Aorta (tissue), 5 donors: ENCODE measurements at regions of chr3 and their contacts with region 1.

Region 1: DNA sequence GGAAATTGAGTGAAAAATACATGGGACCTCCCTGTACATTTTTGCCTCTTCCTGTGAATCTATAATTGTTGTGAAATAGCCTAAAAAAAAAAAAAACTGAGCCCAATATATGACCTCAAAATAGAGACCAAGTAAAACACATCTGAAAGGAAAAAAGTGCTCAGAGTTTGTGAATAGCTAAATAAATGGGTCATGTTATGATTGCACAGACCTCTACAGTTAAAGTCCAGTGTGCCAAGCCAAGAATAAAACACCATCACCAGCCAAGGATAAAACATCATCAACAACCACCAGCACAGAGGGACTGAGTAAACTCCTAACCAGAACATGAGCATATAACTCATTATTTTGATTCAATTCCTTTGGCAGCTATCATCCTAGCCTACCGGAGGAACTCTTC is 115.6 kb upstream of the AGTR1 start:
- DNase-seq: no peak
- ATAC-seq: peak; percentile 86
- H3K4me3 ChIP-seq: no peak overlapping the region
- H3K27ac ChIP-seq: no peak overlapping the region
- H3K4me1 ChIP-seq: peaks cover 0 to 2% of the 10 kb centered on the region in 2 donors
- H3K27me3 ChIP-seq: no peaks in the 10 kb centered on the region

Region 2: GRCh38 chr3:148615385-148615784 is 33.3 kb after region 1 on chr3:
- intact Hi-C with region 1: no loop called
- DNase-seq: no peak
- ATAC-seq: no peak
- H3K4me3 ChIP-seq: no peak overlapping the region
- H3K27ac ChIP-seq: no peak overlapping the region
- H3K4me1 ChIP-seq: no peaks in the 10 kb centered on the region
- H3K27me3 ChIP-seq: no peaks in the 10 kb centered on the region

Region 3: DNA sequence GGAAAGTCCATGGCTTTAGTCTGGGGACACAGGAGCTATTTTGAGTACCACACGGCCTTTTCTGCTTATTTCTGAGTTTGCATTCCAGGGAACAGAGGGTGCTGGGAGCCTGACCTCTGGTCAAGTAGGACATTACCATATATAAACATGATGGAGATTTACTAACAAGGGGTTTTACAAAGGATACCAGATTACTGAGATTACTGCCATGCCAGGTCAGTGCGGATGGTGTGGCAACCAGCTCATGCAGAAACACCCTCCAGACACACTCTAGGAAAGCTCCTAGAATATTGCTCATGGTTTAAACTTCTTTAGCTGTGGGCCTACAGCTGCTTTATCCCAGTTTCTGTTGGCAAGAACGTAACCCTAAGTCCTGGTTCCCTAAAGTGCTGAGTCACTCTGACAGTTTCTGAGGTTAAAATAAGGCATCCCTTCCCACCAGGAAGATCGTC is 61.3 kb after region 1 on chr3:
- intact Hi-C with region 1: loop called in 1 of 2 experiments (anchors 10 kb)
- DNase-seq: peak in 1 of 2 donors; percentile 42
- ATAC-seq: peak; percentile 75
- H3K4me3 ChIP-seq: no peak overlapping the region
- H3K27ac ChIP-seq: peak overlapping the region; percentile 69 to 81
- H3K4me1 ChIP-seq: peaks cover 0 to 6% of the 10 kb centered on the region in 2 donors
- H3K27me3 ChIP-seq: no peaks in the 10 kb centered on the region

Region 4: DNA sequence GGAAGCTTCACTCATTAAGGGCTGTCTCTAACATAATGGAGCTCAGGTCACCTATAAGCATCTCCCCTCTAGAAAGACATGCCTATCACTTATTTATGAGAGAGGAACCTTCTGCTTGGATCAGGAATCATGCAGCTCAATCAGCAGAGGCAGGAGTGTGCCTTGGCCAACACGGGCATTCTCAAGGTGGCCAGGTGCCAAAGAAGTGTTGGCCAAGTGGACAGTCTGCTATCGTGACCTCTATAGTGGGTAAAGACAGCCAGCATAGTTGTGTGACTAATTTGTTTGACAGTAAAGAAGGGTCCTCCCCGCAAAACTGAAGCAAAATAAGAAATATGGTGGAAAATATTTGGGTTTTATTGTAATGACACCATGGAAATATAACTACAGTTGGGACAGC is 100.9 kb after region 1 on chr3:
- intact Hi-C with region 1: no loop called
- DNase-seq: no peak
- ATAC-seq: no peak
- H3K4me3 ChIP-seq: no peak overlapping the region
- H3K27ac ChIP-seq: no peak overlapping the region
- H3K4me1 ChIP-seq: no peaks in the 10 kb centered on the region
- H3K27me3 ChIP-seq: no peaks in the 10 kb centered on the region